ENCODE measurements at regions of chr4 and their contacts with region 1.

Region 1: GRCh38 chr4:83284193-83285054 is at the start of gene COQ2:
- DNase-seq: peak; percentile 97
- H3K4me3 Mint-ChIP-seq: peak within 1 kb of the TSS; percentile 93
- H3K27ac Mint-ChIP-seq: peak within 1 kb of the TSS; percentile 91
- H3K4me1 Mint-ChIP-seq: peaks cover 34% of the 10 kb centered on the region
- H3K27me3 Mint-ChIP-seq: no peaks in the 10 kb centered on the region
- total RNA-seq, gene COQ2: 18.7 to 19.5 TPM

Region 2: DNA sequence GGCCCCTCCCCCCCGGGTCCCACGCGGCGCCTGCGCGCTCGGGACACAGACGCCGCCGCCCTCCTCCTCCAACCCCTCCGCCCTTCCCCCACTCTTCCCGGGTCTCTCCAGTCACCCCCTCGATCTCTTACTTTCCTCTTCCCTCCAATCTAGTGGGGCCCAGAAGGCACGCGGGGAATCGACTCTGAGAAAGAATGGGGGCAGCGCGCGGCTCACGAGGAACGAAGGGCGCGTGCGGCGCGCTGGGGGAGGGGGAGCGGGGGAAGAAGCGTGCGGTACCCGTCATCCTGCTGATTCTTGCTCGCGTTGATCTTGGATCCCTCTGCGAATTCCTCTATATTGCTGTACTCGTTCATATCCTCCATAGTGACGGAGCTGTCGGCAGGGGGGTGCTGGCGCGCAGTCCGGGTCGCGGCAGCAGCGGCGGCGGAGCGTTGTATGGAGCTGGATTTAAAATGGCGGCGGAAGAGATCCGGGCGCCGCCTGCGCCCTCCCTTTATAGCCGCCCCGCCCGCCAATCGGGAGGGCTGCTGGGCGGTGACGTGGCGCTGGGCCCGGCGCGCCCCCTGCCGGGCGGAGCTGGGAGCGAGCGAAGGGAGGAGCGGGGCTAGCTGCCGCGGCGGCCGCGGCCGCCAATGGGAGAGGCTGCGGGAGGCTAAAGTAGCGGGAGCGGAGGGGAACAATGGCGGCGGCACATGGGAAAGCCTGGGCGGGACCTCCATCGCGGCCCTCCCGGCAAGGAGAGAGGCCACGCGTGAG is 855.3 kb before region 1 on chr4:
- CTCF ChIA-PET with region 1: no interaction called
- intact Hi-C with region 1: loop called (anchors 1 kb)
- DNase-seq: peak; percentile 92
- H3K4me3 Mint-ChIP-seq: peak overlapping the region; percentile 93
- H3K27ac Mint-ChIP-seq: peak overlapping the region; percentile 99
- H3K4me1 Mint-ChIP-seq: peaks cover 64% of the 10 kb centered on the region
- H3K27me3 Mint-ChIP-seq: no peaks in the 10 kb centered on the region

Region 3: GRCh38 chr4:82900331-82901128 is 383.9 kb before region 1 on chr4 and contains the start of gene THAP9:
- CTCF ChIA-PET with region 1: interaction called, 3 read pairs
- intact Hi-C with region 1: loop called (anchors 2 kb)
- DNase-seq: peak; percentile 99
- H3K4me3 Mint-ChIP-seq: no peak within 1 kb of the TSS
- H3K27ac Mint-ChIP-seq: no peak within 1 kb of the TSS
- H3K4me1 Mint-ChIP-seq: peaks cover 41% of the 10 kb centered on the region
- H3K27me3 Mint-ChIP-seq: no peaks in the 10 kb centered on the region
- total RNA-seq, gene THAP9: 2.7 to 3.3 TPM

Region 4: DNA sequence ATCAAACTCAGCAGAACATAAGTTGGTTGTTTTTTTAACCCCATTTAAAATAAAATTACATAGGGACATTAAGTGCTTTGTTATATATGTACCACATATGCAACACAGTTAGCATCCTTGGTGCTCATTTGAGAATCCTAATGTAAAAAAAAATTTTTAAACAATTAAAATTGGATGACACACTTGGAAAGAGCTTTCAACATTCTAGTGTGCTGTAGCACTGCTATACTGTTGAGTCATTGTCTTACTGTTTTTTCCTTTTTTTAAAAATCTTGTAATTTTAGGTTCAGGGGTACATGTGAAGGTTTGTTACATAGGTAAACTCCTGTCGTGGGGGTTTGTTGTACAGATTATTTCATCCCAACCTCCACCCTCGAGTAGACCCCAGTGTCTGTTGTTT is 371.1 kb before region 1 on chr4:
- CTCF ChIA-PET with region 1: no interaction called
- intact Hi-C with region 1: no loop called
- DNase-seq: no peak
- H3K4me3 Mint-ChIP-seq: no peak overlapping the region
- H3K27ac Mint-ChIP-seq: no peak overlapping the region
- H3K4me1 Mint-ChIP-seq: no peaks in the 10 kb centered on the region
- H3K27me3 Mint-ChIP-seq: no peaks in the 10 kb centered on the region

Region 5: GRCh38 chr4:83054928-83055327 is 229.5 kb before region 1 on chr4:
- CTCF ChIA-PET with region 1: interaction called, 8 read pairs
- intact Hi-C with region 1: loop called (anchors 1 kb)
- DNase-seq: peak; percentile 34
- H3K4me3 Mint-ChIP-seq: no peak overlapping the region
- H3K27ac Mint-ChIP-seq: no peak overlapping the region
- H3K4me1 Mint-ChIP-seq: no peaks in the 10 kb centered on the region
- H3K27me3 Mint-ChIP-seq: no peaks in the 10 kb centered on the region

Region 6: GRCh38 chr4:83231620-83232076 is 52.8 kb before region 1 on chr4:
- CTCF ChIA-PET with region 1: no interaction called
- intact Hi-C with region 1: loop called (anchors 2 kb)
- DNase-seq: peak; percentile 68
- H3K4me3 Mint-ChIP-seq: no peak overlapping the region
- H3K27ac Mint-ChIP-seq: peak overlapping the region; percentile 16
- H3K4me1 Mint-ChIP-seq: peaks cover 46% of the 10 kb centered on the region
- H3K27me3 Mint-ChIP-seq: peaks cover 3% of the 10 kb centered on the region

Region 7: DNA sequence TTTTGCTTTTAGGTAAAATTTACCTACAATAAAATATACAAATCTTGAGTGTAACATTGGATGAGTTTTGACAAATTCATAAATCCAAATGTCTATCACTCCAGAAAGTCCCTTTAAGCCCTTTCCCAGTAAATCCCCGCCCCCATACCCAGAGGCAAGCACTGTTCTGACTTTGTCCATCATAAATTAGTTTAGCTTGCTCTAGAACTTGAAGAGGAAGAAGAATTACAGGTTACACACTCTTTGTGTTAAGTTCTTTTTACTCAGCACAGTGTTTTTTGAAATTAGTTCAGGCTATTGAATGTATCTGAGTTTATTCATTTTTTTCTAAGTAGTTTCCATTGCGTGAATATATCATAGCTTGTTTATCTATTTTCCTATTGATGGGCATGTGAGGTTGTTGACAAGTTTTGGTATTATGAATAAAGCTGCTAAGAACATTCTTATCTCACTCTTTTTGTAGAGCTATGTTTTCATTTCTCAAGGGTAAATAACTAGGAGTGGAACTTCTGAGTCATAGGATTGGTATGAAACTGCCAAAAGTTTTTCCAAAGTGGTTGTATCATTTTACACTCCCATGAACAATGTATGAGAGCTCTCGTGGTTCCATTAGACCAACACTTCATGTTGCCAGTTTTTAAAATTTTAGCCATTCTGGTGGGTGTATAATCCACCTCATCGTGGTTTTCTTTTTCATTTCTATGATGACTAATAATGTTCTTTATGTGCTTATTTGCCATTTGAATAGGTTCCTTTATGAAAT is 72.7 kb after region 1 on chr4:
- CTCF ChIA-PET with region 1: interaction called, 3 read pairs
- intact Hi-C with region 1: loop called (anchors 1 kb)
- DNase-seq: peak; percentile 63
- H3K4me3 Mint-ChIP-seq: no peak overlapping the region
- H3K27ac Mint-ChIP-seq: peak overlapping the region; percentile 62
- H3K4me1 Mint-ChIP-seq: peaks cover 15% of the 10 kb centered on the region
- H3K27me3 Mint-ChIP-seq: no peaks in the 10 kb centered on the region

Region 8: DNA sequence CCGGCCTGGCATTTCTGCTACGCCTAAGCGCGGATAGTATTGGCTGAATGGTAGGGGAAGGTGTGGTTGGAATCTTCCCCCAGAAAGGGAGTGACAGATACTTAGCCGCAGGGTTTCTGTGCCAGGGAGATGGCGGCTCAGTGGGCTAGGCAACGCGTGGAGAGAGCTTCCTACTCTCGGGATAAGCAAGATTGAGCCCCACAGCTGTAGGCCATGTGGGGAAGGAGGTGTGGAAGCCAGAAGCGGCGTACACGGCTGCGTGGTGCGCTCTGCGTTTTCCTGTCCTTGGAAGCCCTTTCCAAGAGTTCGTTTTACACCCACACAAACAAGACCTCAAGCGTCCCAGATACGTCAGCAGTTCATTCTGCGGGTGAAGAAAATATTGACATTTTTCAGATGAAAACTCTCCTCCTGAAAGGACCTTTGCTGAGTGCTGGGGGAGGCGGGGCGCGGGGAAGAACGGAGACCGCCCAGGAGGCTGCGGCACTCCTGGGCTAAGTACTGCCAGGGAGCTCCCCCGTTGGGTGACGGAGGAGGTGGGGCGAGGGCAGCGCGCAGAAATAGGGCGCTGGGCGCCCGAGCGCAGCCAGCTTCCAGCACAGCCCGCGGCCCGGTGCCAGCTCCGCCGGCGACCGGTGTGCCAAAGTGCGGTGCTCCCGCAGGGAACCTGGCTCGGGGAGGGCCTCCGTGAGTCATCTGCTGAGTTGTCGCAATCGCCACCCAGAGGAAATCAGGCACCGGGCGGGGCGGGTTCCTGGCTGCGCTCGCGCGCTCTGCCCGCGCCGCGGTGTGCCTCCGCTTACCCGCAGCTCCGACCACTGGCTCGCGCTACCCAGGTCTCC is 251.3 kb after region 1 on chr4 and contains the start of gene GPAT3:
- CTCF ChIA-PET with region 1: no interaction called
- intact Hi-C with region 1: loop called (anchors 5 kb)
- DNase-seq: peak; percentile 83
- H3K4me3 Mint-ChIP-seq: peak within 1 kb of the TSS; percentile 73
- H3K27ac Mint-ChIP-seq: peak within 1 kb of the TSS; percentile 15
- H3K4me1 Mint-ChIP-seq: peaks cover 14% of the 10 kb centered on the region
- H3K27me3 Mint-ChIP-seq: peaks cover 2% of the 10 kb centered on the region
- total RNA-seq, gene GPAT3: 2.0 to 3.1 TPM

Measured in activated naive CD4-positive, alpha-beta T cell treated with anti-CD3 and anti-CD28 coated beads for 36 hours (primary cell).